Right lobe of liver (tissue), 6 donors: ENCODE measurements at regions of chr1 and their contacts with region 1.

Region 1: DNA sequence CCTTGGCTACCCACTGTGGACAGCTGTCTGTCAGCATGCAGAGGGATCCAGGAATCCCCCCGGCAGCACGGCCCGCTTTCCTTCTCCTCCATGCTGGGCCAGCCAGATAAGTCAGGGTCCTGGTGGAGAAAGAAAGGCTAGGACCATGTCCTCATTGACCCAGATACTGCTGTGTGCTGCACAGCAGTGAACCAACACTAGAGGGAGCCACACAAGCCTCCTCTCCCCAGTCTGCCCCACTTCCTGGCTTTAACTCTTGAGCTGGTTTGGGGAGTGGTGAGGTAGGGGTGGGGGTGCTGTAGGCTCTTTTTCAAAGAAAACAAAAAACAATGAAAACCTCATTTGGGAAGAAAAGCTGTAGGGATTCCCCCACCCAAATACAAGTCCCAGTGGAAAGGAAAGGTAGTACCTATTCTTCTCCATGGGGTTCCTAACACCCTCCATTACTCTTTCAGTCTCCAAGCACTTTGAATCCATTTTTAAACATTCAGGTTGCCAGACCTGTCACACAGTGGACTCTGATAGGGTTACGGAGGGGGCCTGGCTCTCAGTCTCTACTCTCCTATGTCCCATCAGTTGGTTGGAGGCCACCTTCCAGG is 84.9 kb upstream of the CD1D start:
- DNase-seq: no peak
- ATAC-seq: peak; percentile 47 to 77 (median 66)
- H3K4me3 ChIP-seq: no peak overlapping the region
- H3K27ac ChIP-seq: no peak overlapping the region
- H3K4me1 ChIP-seq: no peaks in the 10 kb centered on the region
- H3K27me3 ChIP-seq: no peaks in the 10 kb centered on the region
- CTCF ChIP-seq: peak; percentile 37 to 61 (median 52)
- POLR2A ChIP-seq: no peak

Region 2: DNA sequence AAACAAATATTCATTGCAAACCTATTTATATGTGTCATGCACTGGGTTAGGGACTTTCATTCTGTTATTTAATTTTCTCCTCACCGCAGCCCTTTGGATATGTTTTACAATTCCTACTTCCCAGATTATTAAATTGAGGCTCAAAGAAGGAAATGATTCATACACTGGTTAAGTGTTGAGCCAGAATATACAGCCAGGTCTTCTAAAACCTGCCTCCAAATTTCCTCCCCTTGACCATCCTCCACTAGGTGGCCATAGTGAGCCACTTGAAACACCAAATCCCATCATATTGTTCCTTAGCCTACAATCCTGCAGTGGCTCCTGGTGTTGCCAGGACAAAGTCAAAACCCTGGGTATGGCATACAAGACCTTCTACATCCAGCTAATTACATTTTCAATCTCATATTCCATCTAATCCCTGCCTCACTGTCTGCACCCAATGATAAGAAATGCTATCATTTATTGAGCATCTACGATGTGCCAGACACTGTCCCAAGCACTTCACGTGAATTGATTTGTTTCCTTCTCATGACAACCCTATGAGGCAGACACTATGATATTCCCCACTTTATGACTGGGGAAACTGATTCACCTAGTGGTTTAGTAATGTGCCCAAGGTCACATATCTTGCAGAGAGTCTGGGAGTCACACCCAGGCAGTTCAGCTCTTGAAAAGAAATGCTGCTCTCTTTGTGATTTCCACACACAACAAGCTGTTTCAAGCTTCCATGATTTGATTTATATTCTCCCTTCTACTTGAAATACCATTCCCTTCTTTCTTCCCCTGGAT is 125.9 kb before region 1 on chr1:
- intact Hi-C with region 1: loop called in 1 of 2 experiments (anchors 10 kb)
- DNase-seq: no peak
- ATAC-seq: peak; percentile 54 to 62 (median 56)
- H3K4me3 ChIP-seq: no peak overlapping the region
- H3K27ac ChIP-seq: no peak overlapping the region
- H3K4me1 ChIP-seq: peaks cover 0 to 11% (median 5%) of the 10 kb centered on the region in 4 donors
- H3K27me3 ChIP-seq: no peaks in the 10 kb centered on the region
- CTCF ChIP-seq: peak; percentile 53 to 73 (median 63)
- POLR2A ChIP-seq: no peak